PC-9 (cell line): ENCODE measurements at regions of chr6 and their contacts with region 1.

Region 1: GRCh38 chr6:158644231-158645063 is at the start of gene DYNLT1:
- DNase-seq: peak; percentile 93
- H3K4me3 ChIP-seq: peak within 1 kb of the TSS; percentile 68
- H3K27ac ChIP-seq: peak within 1 kb of the TSS; percentile 85
- H3K4me1 ChIP-seq: peaks cover 64% of the 10 kb centered on the region
- H3K27me3 ChIP-seq: no peaks in the 10 kb centered on the region
- CTCF ChIP-seq: no peak
- total RNA-seq, gene DYNLT1: 99.6 and 105 TPM in 2 replicates

Region 2: DNA sequence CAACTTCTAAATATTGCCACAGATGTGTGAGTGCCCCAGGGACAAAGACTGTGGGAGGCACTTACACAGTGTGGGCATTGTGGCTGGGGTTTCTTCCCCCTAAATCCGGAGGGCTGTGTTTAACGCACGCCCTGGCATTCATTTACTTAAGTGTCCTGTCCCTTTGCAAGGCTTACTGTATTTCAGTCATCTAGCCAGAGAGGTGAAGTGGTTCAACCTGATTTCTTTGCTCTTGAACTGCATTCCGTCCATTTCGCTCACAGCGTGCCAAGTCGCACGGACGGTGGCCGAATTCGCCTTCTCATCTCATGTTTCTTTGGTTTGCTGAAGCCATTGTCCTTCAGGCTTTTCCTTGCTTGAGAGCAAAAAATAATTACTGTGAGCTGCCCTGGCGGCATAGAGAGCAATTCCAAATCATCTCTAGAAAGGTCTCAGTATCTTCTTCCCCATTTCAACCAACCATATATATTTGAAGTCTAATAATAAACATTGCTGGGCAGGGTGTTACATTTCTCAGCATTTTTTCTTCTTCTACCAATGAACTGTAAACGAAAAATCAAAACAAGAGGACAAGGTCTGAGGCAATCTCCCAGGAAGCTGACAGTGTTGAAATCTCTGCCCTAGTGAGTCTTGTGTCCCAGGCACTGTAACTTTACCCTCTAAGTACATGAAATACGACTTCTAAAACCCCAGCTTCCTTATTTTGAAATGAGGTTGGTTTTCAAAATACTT is 22.3 kb after region 1 on chr6:
- CTCF ChIA-PET with region 1: no interaction called
- POLR2A ChIA-PET with region 1: no interaction called
- intact Hi-C with region 1: loop called (anchors 2 kb)
- DNase-seq: peak; percentile 68 to 95
- H3K4me3 ChIP-seq: peak overlapping the region; percentile 46; the same call in 1 of the 2 replicates
- H3K27ac ChIP-seq: peak overlapping the region; percentile 98
- H3K4me1 ChIP-seq: peaks cover 76% of the 10 kb centered on the region
- H3K27me3 ChIP-seq: no peaks in the 10 kb centered on the region
- CTCF ChIP-seq: no peak

Region 3: DNA sequence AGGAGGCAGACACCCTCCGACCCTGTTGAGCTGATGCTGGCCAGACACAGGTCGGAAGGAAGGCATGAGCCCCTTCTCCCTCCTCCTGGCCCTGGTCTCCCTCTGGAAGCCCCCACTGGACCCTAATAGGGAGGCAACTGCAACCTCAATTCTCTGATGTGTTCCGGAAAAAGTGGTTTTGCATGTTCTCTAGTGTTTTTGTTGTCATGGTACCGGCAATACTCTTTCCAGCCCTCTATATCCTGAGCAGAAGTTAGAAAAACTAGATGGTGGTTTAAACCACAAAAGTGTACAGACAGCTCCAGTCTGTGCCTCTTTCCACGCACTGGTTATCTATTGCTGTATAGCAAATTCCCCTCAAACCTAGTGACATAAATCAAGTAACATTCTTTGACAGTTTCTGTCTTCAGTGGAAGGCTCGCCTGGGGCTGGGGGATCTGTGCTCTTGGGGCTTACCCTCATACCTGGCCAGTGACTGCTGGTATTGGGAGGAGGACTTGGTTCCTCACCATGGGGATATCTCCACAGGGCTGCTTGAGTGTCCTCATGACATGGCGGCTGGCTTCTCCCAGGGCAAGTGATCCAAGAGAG is 42.4 kb after region 1 on chr6:
- CTCF ChIA-PET with region 1: interaction called, 3 read pairs
- POLR2A ChIA-PET with region 1: no interaction called
- intact Hi-C with region 1: loop called (anchors 5 kb)
- DNase-seq: no peak
- H3K4me3 ChIP-seq: no peak overlapping the region
- H3K27ac ChIP-seq: peak overlapping the region; percentile 20
- H3K4me1 ChIP-seq: peaks cover 57% of the 10 kb centered on the region
- H3K27me3 ChIP-seq: no peaks in the 10 kb centered on the region
- CTCF ChIP-seq: no peak

Region 4: GRCh38 chr6:158853072-158853871 is 208.8 kb after region 1 on chr6:
- CTCF ChIA-PET with region 1: no interaction called
- POLR2A ChIA-PET with region 1: interaction called, 4 read pairs
- intact Hi-C with region 1: loop called (anchors 10 kb)
- DNase-seq: peak; percentile 92 to 100
- H3K4me3 ChIP-seq: peak overlapping the region; percentile 51
- H3K27ac ChIP-seq: peak overlapping the region; percentile 99
- H3K4me1 ChIP-seq: peaks cover 93% of the 10 kb centered on the region
- H3K27me3 ChIP-seq: no peaks in the 10 kb centered on the region
- CTCF ChIP-seq: no peak

Region 5: GRCh38 chr6:158972241-158973233 is 328.1 kb after region 1 on chr6:
- CTCF ChIA-PET with region 1: no interaction called
- POLR2A ChIA-PET with region 1: no interaction called
- intact Hi-C with region 1: loop called (anchors 10 kb)
- DNase-seq: peak; percentile 4 to 60
- H3K4me3 ChIP-seq: no peak overlapping the region
- H3K27ac ChIP-seq: peak overlapping the region; percentile 42
- H3K4me1 ChIP-seq: peaks cover 6% of the 10 kb centered on the region
- H3K27me3 ChIP-seq: no peaks in the 10 kb centered on the region
- CTCF ChIP-seq: peak; percentile 82